Activated B cell treated with CpG ODN at 0.5 μM for 24 hours (primary cell): ENCODE measurements at regions of chr6 and their contacts with region 1.

Region 1: GRCh38 chr6:149082286-149082707 is 235.2 kb upstream of the TAB2 start:
- DNase-seq: peak; percentile 43
- ATAC-seq: peak; percentile 75
- H3K4me3 Mint-ChIP-seq: no peak overlapping the region
- H3K27ac Mint-ChIP-seq: no peak overlapping the region
- H3K4me1 Mint-ChIP-seq: peaks cover 13% of the 10 kb centered on the region
- H3K27me3 Mint-ChIP-seq: no peaks in the 10 kb centered on the region
- CTCF ChIP-seq: peak; percentile 26

Region 2: GRCh38 chr6:149190224-149190831 is 108.0 kb after region 1 on chr6:
- CTCF ChIA-PET with region 1: interaction called, 8 read pairs
- POLR2A ChIA-PET with region 1: no interaction called
- intact Hi-C with region 1: loop called (anchors 1 kb)
- DNase-seq: peak; percentile 56
- ATAC-seq: peak; percentile 82
- H3K4me3 Mint-ChIP-seq: no peak overlapping the region
- H3K27ac Mint-ChIP-seq: no peak overlapping the region
- H3K4me1 Mint-ChIP-seq: peaks cover 9% of the 10 kb centered on the region
- H3K27me3 Mint-ChIP-seq: no peaks in the 10 kb centered on the region
- CTCF ChIP-seq: no peak